Breast epithelium (tissue), 4 donors: ENCODE measurements at regions of chr3 and their contacts with region 1.

Region 1: GRCh38 chr3:196875258-196875657 is 7.5 kb downstream of the SENP5 start:
- DNase-seq: no peak
- H3K4me3 ChIP-seq: no peak overlapping the region
- H3K27ac ChIP-seq: no peak overlapping the region
- H3K4me1 ChIP-seq: no peaks in the 10 kb centered on the region
- H3K27me3 ChIP-seq: no peaks in the 10 kb centered on the region
- CTCF ChIP-seq: no peak
- POLR2A ChIP-seq: no peak

Region 2: DNA sequence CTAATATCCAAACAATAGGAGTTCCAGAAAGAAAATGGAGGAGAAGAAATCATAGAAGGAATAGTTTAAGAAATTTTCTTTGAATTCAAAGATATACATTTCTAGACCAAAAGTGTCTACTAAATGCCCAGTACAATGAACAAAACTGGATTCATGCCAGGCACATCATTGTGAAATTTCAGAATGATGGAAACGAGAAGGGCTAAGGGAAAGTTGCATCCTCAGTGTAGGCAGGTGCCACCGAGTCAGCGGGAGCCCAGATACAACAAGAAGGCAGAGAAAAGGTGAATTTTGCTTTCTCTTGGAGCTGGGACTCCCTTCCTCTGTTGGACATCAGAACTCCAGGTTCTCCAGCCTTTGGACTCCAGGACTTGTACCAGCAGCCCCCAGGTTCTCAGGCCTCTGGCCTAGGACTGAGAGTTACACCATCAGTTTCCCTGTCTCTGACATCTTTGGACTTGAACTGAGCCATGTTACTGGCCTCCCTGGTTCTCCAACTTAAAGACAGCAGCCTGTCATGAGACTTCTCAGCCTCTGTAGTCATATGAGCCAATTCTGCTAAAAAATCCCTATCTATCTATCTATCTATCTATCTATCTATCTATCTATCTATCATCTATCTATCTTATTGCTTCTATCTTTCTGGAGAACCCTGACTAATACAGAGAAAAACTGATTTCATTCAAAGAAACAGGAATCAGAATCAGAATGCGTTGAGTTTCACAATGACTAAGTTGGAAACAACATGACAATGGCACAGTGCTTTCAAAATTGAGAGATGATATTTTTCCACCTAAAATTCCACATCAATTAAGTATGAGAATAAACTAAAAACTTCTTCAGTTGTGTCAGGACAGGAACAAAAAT is 1981.9 kb before region 1 on chr3:
- intact Hi-C with region 1: no loop called
- DNase-seq: no peak
- H3K4me3 ChIP-seq: no peak overlapping the region
- H3K27ac ChIP-seq: no peak overlapping the region
- H3K4me1 ChIP-seq: no peaks in the 10 kb centered on the region
- H3K27me3 ChIP-seq: no peaks in the 10 kb centered on the region
- CTCF ChIP-seq: no peak
- POLR2A ChIP-seq: no peak

Region 3: DNA sequence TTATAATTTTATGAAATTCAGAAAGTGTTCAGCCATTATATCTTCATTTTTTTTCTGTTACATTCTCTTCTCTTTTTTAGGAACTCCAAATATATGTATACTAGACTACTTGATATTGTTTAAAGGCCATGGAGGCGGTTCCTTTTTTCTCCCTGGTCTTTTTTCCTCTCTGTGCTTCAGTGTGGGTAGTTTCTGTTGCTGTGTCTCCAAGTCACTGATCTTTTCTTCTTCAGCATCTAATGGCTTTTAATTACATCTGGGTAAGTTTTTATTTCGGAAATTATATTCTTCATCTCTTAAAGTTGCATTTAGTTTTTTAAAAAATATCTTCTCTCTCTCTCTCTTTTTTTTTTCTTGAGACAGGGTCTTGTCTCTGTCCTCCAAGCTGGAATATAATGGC is 154.2 kb before region 1 on chr3:
- intact Hi-C with region 1: loop called (anchors 5 kb)
- DNase-seq: no peak
- H3K4me3 ChIP-seq: no peak overlapping the region
- H3K27ac ChIP-seq: no peak overlapping the region
- H3K4me1 ChIP-seq: no peaks in the 10 kb centered on the region
- H3K27me3 ChIP-seq: no peaks in the 10 kb centered on the region
- CTCF ChIP-seq: no peak
- POLR2A ChIP-seq: no peak

Region 4: GRCh38 chr3:196757876-196758739 is 117.2 kb before region 1 on chr3:
- intact Hi-C with region 1: no loop called
- DNase-seq: no peak
- H3K4me3 ChIP-seq: no peak overlapping the region
- H3K27ac ChIP-seq: no peak overlapping the region
- H3K4me1 ChIP-seq: no peaks in the 10 kb centered on the region
- H3K27me3 ChIP-seq: no peaks in the 10 kb centered on the region
- CTCF ChIP-seq: no peak
- POLR2A ChIP-seq: no peak

Region 5: GRCh38 chr3:197256836-197257444 is 381.7 kb after region 1 on chr3:
- intact Hi-C with region 1: no loop called
- DNase-seq: no peak
- H3K4me3 ChIP-seq: no peak overlapping the region
- H3K27ac ChIP-seq: no peak overlapping the region
- H3K4me1 ChIP-seq: no peaks in the 10 kb centered on the region
- H3K27me3 ChIP-seq: no peaks in the 10 kb centered on the region
- CTCF ChIP-seq: peak in 2 of 3 donors; percentile 50 to 69
- POLR2A ChIP-seq: no peak